ENCODE measurements at regions of chr2 and their contacts with region 1.

Region 1: GRCh38 chr2:65186872-65187851 is 40.5 kb upstream of the ACTR2 start:
- DNase-seq: peak; percentile 82
- ATAC-seq: peak; percentile 98
- H3K4me3 Mint-ChIP-seq: no peak overlapping the region
- H3K27ac Mint-ChIP-seq: no peak overlapping the region; the same call in 1 of the 2 replicates
- H3K4me1 Mint-ChIP-seq: peaks cover 6% of the 10 kb centered on the region
- H3K27me3 Mint-ChIP-seq: peaks cover 16% of the 10 kb centered on the region
- CTCF ChIP-seq: peak; percentile 45; the same call in 1 of the 2 replicates

Region 2: DNA sequence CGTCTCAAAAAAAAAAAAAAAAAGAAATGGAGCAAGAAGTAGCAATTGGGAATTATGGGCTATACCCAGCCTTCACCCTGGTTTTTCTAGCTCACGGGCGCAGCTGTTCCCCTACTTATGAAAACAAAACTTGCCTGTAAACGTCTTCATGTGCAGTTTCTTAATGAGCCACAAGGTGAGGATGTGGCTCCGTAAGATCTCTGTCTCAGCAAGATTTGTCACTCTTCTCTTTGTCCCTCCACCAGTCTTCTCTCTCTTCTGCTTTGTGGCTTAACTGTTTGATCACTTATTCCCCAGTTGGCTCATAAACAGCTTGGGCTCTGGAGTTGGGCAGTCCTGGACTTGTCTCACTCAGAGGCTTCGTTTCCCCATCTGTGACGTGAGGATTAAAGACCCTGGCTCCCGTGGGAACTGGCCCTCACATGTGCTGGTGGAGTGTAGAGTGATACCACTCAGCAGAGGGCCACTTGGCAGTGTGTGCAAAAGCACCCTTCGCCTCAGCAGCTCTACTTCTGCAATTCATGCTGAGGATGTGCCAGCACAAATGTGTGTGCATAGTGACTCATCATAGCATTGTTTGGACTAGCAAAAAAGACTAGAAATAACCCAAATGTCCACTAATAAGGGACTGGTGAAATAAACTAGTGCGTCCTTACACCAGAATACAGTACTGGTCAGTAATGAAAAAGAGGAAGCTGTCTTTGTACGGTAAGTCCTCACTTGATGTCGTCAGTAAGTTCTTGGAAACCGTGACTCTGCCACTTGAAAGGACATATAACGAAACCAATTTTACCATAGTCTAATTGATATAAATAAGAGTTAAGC is 122.2 kb before region 1 on chr2:
- CTCF ChIA-PET with region 1: interaction called, 26 read pairs
- POLR2A ChIA-PET with region 1: no interaction called
- DNase-seq: no peak
- ATAC-seq: peak; percentile 76
- H3K4me3 Mint-ChIP-seq: no peak overlapping the region
- H3K27ac Mint-ChIP-seq: peak overlapping the region; percentile 59
- H3K4me1 Mint-ChIP-seq: peaks cover 12% of the 10 kb centered on the region; the same call in 1 of the 2 replicates
- H3K27me3 Mint-ChIP-seq: no peaks in the 10 kb centered on the region
- CTCF ChIP-seq: peak; percentile 35; the same call in 1 of the 2 replicates

Region 3: DNA sequence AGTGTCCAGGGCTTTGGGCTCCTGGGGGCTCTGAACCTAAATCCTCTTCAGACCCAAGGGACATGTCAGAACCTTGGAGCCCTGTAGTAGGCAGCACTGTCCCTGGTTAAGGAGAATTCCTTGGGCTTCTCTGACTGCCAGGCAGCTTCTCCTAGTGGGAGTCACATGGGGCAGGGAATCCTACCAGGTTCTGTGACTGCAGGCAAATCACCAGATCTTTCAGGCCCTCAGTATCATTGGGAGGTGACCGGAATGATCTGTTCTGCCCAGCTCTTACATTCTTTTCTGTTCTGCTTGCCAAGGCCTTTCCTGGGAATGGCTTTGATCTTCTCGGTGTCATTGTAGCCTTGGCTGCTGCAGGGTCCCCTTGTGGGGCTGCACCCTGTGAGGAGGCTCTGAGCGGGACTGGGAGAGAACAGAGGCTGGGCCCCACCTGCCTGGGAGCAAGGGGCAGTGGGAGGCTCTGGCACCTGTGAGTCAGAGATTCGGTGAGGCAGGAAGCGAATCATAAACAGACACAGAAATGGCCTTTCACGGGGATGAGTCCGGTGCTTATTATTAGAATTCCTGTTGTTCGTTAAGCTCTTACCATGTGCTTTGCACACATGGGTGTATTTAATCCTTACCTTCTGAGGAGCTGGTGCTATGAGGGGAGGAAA is 116.9 kb before region 1 on chr2:
- CTCF ChIA-PET with region 1: interaction called, 26 read pairs
- POLR2A ChIA-PET with region 1: no interaction called
- DNase-seq: no peak
- ATAC-seq: peak; percentile 54
- H3K4me3 Mint-ChIP-seq: no peak overlapping the region
- H3K27ac Mint-ChIP-seq: peak overlapping the region; percentile 61; the same call in 1 of the 2 replicates
- H3K4me1 Mint-ChIP-seq: peaks cover 8% of the 10 kb centered on the region
- H3K27me3 Mint-ChIP-seq: no peaks in the 10 kb centered on the region
- CTCF ChIP-seq: no peak

Region 4: GRCh38 chr2:65075605-65076344 is 111.4 kb before region 1 on chr2:
- CTCF ChIA-PET with region 1: interaction called, 18 read pairs
- POLR2A ChIA-PET with region 1: no interaction called
- DNase-seq: peak; percentile 36
- ATAC-seq: peak; percentile 60
- H3K4me3 Mint-ChIP-seq: no peak overlapping the region; the same call in 1 of the 2 replicates
- H3K27ac Mint-ChIP-seq: peak overlapping the region; percentile 89
- H3K4me1 Mint-ChIP-seq: peaks cover 32% of the 10 kb centered on the region
- H3K27me3 Mint-ChIP-seq: no peaks in the 10 kb centered on the region
- CTCF ChIP-seq: no peak

Region 5: DNA sequence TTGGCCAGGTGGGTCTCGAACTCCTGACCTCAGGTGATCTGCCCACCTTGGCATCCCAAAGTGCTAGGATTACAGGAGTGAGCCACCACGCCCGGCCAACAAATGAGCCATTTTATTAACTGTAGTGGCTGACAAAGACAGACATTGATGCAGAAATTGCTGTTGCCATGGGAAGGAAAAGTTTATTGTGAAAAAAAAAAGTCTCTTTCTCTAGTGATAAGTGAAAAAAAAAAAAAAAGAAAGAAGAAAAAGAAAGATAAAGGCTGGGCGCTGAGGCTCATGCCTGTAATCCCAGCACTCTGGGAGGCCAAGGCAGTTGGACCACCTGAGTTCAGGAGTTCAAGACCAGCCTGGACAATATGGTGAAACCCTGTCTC is 17.4 kb before region 1 on chr2:
- CTCF ChIA-PET with region 1: interaction called, 13 read pairs
- POLR2A ChIA-PET with region 1: no interaction called
- DNase-seq: no peak
- ATAC-seq: no peak
- H3K4me3 Mint-ChIP-seq: no peak overlapping the region
- H3K27ac Mint-ChIP-seq: no peak overlapping the region
- H3K4me1 Mint-ChIP-seq: no peaks in the 10 kb centered on the region
- H3K27me3 Mint-ChIP-seq: no peaks in the 10 kb centered on the region
- CTCF ChIP-seq: no peak

Region 6: GRCh38 chr2:65256054-65256453 is 68.9 kb after region 1 on chr2:
- CTCF ChIA-PET with region 1: no interaction called
- POLR2A ChIA-PET with region 1: interaction called, 11 read pairs
- DNase-seq: no peak
- ATAC-seq: no peak
- H3K4me3 Mint-ChIP-seq: no peak overlapping the region
- H3K27ac Mint-ChIP-seq: no peak overlapping the region
- H3K4me1 Mint-ChIP-seq: no peaks in the 10 kb centered on the region
- H3K27me3 Mint-ChIP-seq: no peaks in the 10 kb centered on the region
- CTCF ChIP-seq: no peak